Motor neuron (in vitro differentiated cells): ENCODE measurements at regions of chr11 and their contacts with region 1.

Region 1: GRCh38 chr11:31160504-31161422 is 208.8 kb downstream of the DCDC1 start:
- ATAC-seq: no peak
- H3K4me3 ChIP-seq: no peak overlapping the region
- H3K27ac ChIP-seq: no peak overlapping the region
- H3K4me1 ChIP-seq: no peaks in the 10 kb centered on the region

Region 2: GRCh38 chr11:31060880-31061279 is 99.9 kb before region 1 on chr11:
- in situ Hi-C with region 1: loop called in 1 of 9 experiments (anchors 25 kb)
- ATAC-seq: peak in 1 of 8 experiments; percentile 42
- H3K4me3 ChIP-seq: no peak overlapping the region
- H3K27ac ChIP-seq: no peak overlapping the region
- H3K4me1 ChIP-seq: no peaks in the 10 kb centered on the region